AG04450 (cell line): ENCODE measurements at regions of chr19 and their contacts with region 1.

Region 1: GRCh38 chr19:10717356-10718204 is at the start of gene DNM2:
- DNase-seq: peak; percentile 100
- H3K4me3 ChIP-seq: peak within 1 kb of the TSS; percentile 92
- H3K27ac ChIP-seq: peak within 1 kb of the TSS; percentile 52
- H3K27me3 ChIP-seq: no peaks in the 10 kb centered on the region
- CTCF ChIP-seq: peak; percentile 82
- polyA plus RNA-seq, gene DNM2: 36.9 and 49.1 TPM in 2 replicates

Region 2: DNA sequence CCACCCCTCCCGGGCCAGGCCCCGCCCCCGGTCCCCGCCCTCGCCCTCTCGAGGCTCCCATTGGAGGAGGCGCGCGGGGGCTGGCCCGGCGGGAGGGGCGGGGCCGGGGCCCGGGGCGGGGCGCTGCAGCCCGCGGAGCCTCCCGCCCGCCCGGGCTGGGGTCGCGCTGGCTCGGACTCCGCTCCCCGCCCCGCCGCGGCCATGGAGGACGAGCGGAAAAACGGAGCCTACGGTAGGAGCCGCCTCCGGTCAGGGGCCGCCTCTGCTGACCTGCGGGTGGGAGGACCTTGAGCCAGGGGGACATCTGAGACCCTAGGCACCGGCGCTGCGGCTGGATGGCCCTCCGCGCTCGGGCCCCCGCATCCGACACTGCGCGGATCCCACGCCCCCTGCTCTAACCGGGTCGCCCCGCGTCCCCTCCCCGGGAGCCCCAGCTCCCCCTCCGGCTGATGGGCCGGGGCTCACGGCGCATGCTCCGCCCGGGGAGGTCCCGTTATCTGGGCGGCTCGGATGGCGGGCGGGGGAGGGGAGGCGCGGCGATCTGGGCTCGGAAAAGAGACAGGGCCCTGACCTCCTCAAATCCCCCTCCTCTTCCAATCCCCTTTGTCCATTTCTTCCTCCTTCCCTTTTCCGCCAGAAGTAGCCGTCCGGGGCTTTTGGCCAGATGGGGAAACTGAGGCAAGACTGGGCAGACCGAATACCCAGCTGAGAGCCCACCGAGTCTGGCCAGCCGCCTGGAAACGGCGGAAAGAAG is 115.1 kb before region 1 on chr19:
- CTCF ChIA-PET with region 1: no interaction called
- POLR2A ChIA-PET with region 1: no interaction called
- DNase-seq: no peak
- H3K4me3 ChIP-seq: peak overlapping the region; percentile 92
- H3K27ac ChIP-seq: peak overlapping the region; percentile 47
- H3K27me3 ChIP-seq: peaks cover 10% of the 10 kb centered on the region
- CTCF ChIP-seq: no peak

Region 3: DNA sequence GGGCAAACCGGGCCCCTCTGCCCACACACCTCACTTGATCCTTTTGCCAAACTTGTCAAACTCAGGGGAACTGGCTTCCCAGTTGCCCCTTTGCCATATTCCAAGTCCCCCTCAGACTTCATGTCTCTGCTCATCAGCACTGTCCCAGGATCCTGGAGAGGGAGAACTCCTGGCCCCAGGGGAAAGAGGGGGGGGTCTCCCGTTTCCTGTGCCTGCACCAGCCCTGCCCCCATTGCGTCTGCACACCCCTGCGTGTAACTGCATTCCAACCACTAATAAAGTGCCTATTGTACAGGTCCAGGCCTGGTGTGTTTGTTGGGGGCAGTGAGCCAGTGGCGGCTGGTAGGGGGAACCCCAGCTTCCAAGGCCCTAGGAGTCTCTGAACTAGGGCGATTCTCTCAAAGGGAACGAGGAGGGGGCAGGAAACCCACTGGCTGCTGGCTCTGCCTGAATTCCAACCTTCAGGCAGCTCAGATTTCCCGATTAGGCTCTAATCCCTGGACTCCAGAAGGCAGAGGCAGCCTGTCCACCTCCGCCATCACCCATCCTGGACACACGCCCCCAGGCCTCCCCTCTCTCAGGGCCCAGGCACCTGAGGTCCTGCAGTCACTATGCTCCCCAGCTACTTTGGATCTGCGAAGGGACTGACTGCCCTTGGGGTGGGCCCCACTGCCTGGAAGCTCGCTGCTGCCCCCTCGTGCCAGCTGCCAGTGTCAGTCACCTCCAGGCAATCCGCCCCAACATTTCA is 73.1 kb before region 1 on chr19:
- CTCF ChIA-PET with region 1: no interaction called
- POLR2A ChIA-PET with region 1: no interaction called
- DNase-seq: peak; percentile 45
- H3K4me3 ChIP-seq: no peak overlapping the region
- H3K27ac ChIP-seq: no peak overlapping the region
- H3K27me3 ChIP-seq: no peaks in the 10 kb centered on the region
- CTCF ChIP-seq: peak; percentile 95

Region 4: GRCh38 chr19:10701955-10702525 is 15.5 kb before region 1 on chr19:
- CTCF ChIA-PET with region 1: interaction called, 20 read pairs
- POLR2A ChIA-PET with region 1: interaction called, 7 read pairs
- DNase-seq: no peak
- H3K4me3 ChIP-seq: peak overlapping the region; percentile 99
- H3K27ac ChIP-seq: peak overlapping the region; percentile 70
- H3K27me3 ChIP-seq: no peaks in the 10 kb centered on the region
- CTCF ChIP-seq: no peak

Region 5: DNA sequence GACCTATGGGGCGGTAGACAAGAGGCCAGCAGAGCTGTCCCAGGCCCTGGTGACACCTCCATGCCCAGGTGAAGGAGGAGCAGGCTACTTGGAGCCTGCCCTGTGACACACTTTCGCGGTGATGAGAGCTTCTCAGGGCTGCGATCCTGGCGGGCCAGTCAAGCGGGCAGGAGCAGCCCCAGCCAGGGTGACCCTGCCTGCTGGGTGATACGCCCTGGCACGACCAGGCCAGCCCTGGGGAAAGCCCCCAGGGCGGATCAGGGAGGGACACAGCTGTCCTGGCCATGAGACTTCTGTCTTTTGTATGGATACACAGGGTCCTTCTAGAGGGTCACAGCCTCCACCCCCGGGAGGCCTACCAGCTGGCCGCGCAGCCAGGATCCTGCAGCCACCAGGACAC is 13.3 kb after region 1 on chr19:
- CTCF ChIA-PET with region 1: interaction called, 10 read pairs
- POLR2A ChIA-PET with region 1: no interaction called
- DNase-seq: no peak
- H3K4me3 ChIP-seq: no peak overlapping the region
- H3K27ac ChIP-seq: no peak overlapping the region
- H3K27me3 ChIP-seq: no peaks in the 10 kb centered on the region
- CTCF ChIP-seq: no peak

Region 6: DNA sequence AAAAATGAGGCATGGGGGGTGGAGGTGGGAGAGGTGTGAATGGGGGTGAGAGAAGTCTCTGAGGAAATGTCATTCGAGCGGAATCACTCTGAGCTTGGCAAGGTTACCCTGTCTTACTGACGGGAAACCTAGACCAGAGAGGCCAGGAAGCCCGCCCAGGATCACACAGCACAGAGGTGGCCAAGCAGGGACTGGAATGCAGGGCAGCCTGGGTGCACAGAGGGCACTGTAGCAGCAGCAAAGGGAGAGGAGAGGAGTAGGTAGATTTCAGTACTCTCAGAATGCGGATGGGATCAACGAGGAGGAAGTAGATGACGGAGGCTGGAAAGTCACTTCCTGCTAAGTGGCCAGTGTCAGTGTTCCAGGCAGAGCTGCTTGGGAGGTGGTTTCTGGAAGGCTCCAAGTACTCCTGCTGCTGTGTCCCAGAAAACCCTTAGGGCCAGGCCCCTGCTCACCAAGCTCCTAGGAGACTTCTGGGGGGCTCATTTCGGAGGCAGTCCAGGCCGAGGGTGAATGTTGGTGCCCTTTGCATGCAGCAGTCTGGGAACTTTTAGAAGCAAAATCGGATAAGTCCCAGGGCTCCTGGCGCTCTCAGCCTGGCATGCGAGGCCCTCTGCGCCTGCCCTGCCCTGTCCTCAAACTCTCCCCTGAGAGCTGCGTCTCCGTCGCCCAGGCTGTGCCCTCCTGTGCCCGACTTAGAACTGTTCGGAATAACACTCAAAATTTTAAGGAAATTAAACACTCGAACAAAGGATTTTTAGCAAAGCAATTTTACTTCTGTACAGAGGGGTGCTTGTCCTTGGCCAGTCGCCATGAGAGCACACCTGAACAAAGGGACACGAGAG is 33.8 kb after region 1 on chr19:
- CTCF ChIA-PET with region 1: no interaction called
- POLR2A ChIA-PET with region 1: no interaction called
- DNase-seq: no peak
- H3K4me3 ChIP-seq: no peak overlapping the region
- H3K27ac ChIP-seq: no peak overlapping the region
- H3K27me3 ChIP-seq: no peaks in the 10 kb centered on the region
- CTCF ChIP-seq: no peak

Region 7: DNA sequence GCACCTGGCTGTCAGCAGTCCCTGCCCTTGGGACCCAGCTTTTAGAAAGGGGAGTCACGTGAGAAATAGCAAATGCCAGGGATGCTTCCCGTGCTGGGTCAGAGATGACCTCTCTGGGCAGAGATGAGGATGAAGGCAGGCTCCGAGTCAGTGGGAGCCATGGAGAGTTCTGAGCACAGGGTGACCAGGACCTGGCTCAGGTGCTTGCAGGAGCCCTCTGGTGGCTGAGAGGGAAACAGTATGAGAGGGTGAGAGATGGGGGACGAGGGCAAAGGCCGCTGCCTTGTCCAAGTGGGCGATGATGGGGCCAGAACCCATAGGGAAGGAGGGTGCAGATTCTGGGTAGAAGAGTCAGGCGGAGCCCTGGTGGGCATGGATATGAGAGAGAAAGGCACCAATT is 102.6 kb after region 1 on chr19:
- CTCF ChIA-PET with region 1: interaction called, 12 read pairs
- POLR2A ChIA-PET with region 1: interaction called, 5 read pairs
- DNase-seq: no peak
- H3K4me3 ChIP-seq: no peak overlapping the region
- H3K27ac ChIP-seq: no peak overlapping the region
- H3K27me3 ChIP-seq: no peaks in the 10 kb centered on the region
- CTCF ChIP-seq: peak; percentile 22; the same call in 1 of the 2 replicates

Region 8: GRCh38 chr19:10858204-10858828 is 140.7 kb after region 1 on chr19:
- CTCF ChIA-PET with region 1: interaction called, 114 read pairs
- POLR2A ChIA-PET with region 1: no interaction called
- DNase-seq: no peak
- H3K4me3 ChIP-seq: no peak overlapping the region
- H3K27ac ChIP-seq: no peak overlapping the region
- H3K27me3 ChIP-seq: no peaks in the 10 kb centered on the region
- CTCF ChIP-seq: peak; percentile 86

Region 9: DNA sequence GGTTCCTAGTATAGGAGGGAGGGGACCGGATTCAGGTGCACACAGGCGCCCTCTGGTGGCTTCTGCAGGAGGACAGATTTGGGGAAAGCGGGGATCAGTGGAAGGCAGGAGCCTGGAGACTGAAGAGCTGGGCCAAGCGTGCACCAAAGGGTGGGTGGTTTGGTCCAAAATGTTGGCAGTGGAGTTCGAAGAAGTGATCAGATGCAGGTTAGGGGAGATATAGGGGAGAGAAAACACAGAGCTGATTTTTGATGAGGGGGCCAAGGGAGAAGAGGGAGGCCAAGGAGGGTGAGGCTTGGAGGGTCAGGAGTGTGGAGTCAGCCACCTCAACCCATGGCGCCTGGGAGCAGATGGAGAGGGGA is 146.9 kb after region 1 on chr19:
- CTCF ChIA-PET with region 1: interaction called, 114 read pairs
- POLR2A ChIA-PET with region 1: no interaction called
- DNase-seq: peak; percentile 47
- H3K4me3 ChIP-seq: no peak overlapping the region
- H3K27ac ChIP-seq: no peak overlapping the region
- H3K27me3 ChIP-seq: no peaks in the 10 kb centered on the region
- CTCF ChIP-seq: peak; percentile 91